GM12878 (cell line): ENCODE measurements at regions of chr20 and their contacts with region 1.

Region 1: GRCh38 chr20:50516180-50516934 is 6.2 kb downstream of the PTPN1 start:
- DNase-seq: peak; percentile 87
- ATAC-seq: peak; percentile 59
- H3K4me3 ChIP-seq: peak overlapping the region; percentile 100
- H3K27ac ChIP-seq: peak overlapping the region; percentile 98
- H3K4me1 ChIP-seq: peaks cover 46% of the 10 kb centered on the region
- H3K27me3 ChIP-seq: no peaks in the 10 kb centered on the region
- CTCF ChIP-seq: no peak
- EP300 ChIP-seq: peak; percentile 95 to 98
- POLR2A ChIP-seq: no peak
- RAD21 ChIP-seq: no peak

Region 2: DNA sequence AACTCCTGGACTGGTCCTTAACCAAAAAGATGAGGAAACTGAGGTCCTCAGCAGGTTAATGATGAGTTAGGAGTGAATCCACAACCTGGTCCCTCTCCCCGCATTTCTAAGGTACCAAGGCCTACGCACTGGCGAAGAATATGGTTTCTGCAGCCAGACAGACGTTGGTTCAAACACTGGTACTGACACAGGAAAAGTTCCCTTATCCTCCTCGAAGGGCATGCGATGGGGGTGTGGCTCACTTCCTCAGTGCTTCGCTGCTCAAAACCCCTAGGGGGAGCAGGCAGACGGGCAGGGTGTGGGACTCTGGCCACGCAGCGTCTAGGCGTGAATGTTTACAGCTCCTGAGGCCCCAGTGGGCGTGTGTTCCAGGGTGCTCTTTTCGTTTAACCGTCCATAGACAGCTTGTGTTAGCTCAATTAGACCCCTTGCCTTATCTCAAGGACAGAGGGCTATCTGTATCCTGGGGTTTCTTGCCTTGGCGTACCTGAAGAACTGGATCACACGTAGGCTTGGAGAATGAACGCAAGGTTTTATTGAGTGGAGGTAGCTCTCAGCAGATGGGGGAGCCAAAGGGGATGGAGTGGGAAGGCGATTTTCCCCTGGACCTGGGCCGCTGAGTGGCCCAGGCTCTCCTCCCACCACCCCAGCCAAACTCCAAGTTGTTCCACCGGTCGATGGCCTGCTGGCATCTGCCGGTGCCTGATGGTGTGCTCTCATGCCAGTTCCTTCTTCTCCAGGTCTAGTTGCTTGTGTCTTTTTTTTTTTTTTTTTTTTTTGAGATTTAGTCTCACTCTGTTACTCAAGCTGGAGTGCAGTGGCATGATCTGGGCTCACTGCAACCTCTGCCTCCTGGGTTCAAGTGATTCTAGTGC is 38.0 kb before region 1 on chr20:
- CTCF ChIA-PET with region 1: interaction called, 13 read pairs
- POLR2A ChIA-PET with region 1: interaction called, 29 read pairs
- RAD21 ChIA-PET with region 1: interaction called, 23 read pairs
- SMC1A ChIA-PET with region 1: interaction called, 2,799 read pairs
- in situ Hi-C with region 1: no loop called
- intact Hi-C with region 1: loop called (anchors 2 kb)
- DNase-seq: no peak
- ATAC-seq: peak; percentile 99
- H3K4me3 ChIP-seq: no peak overlapping the region
- H3K27ac ChIP-seq: no peak overlapping the region
- H3K4me1 ChIP-seq: peaks cover 21% of the 10 kb centered on the region
- H3K27me3 ChIP-seq: no peaks in the 10 kb centered on the region
- CTCF ChIP-seq: peak; percentile 60 to 87 (median 84)
- EP300 ChIP-seq: no peak
- POLR2A ChIP-seq: no peak
- RAD21 ChIP-seq: peak; percentile 79

Region 3: DNA sequence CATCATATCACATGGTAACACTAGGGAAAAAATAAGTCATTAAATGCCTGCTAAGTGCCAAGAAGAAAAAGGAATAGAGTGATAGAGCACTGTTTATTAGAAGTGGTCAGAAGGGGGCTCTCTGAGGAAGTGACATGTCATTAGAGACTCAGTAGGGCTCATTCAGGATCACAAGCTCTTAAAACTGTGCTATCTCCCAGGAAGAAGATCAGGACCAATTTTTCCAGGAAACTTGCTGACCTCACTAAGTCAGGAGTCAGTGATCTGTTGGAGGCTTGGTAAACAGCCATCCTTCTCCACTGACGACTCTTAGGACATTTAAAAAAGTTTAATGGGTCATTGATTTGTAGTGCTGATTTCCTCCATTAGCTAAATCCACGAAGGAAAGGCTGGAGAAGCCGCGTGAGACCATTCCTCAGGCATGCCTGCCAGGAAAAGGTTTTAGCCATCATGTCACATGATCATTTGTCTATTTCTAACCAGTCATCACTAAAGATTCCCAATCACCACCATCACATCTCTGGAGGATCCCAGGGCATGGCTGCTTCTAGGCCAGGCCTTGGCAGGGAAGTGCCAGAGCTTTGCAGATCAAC is 12.0 kb before region 1 on chr20:
- CTCF ChIA-PET with region 1: interaction called, 15 read pairs
- POLR2A ChIA-PET with region 1: interaction called, 33 read pairs
- RAD21 ChIA-PET with region 1: interaction called, 18 read pairs
- SMC1A ChIA-PET with region 1: interaction called, 2,799 read pairs
- in situ Hi-C with region 1: no loop called
- intact Hi-C with region 1: no loop called
- DNase-seq: no peak
- ATAC-seq: peak; percentile 64
- H3K4me3 ChIP-seq: no peak overlapping the region
- H3K27ac ChIP-seq: no peak overlapping the region
- H3K4me1 ChIP-seq: peaks cover 29% of the 10 kb centered on the region
- H3K27me3 ChIP-seq: no peaks in the 10 kb centered on the region
- CTCF ChIP-seq: peak; percentile 21 to 43 (median 21); a peak in 3 of 6 replicates
- EP300 ChIP-seq: no peak
- POLR2A ChIP-seq: no peak
- RAD21 ChIP-seq: peak; percentile 49; the same call in 1 of the 2 replicates

Region 4: DNA sequence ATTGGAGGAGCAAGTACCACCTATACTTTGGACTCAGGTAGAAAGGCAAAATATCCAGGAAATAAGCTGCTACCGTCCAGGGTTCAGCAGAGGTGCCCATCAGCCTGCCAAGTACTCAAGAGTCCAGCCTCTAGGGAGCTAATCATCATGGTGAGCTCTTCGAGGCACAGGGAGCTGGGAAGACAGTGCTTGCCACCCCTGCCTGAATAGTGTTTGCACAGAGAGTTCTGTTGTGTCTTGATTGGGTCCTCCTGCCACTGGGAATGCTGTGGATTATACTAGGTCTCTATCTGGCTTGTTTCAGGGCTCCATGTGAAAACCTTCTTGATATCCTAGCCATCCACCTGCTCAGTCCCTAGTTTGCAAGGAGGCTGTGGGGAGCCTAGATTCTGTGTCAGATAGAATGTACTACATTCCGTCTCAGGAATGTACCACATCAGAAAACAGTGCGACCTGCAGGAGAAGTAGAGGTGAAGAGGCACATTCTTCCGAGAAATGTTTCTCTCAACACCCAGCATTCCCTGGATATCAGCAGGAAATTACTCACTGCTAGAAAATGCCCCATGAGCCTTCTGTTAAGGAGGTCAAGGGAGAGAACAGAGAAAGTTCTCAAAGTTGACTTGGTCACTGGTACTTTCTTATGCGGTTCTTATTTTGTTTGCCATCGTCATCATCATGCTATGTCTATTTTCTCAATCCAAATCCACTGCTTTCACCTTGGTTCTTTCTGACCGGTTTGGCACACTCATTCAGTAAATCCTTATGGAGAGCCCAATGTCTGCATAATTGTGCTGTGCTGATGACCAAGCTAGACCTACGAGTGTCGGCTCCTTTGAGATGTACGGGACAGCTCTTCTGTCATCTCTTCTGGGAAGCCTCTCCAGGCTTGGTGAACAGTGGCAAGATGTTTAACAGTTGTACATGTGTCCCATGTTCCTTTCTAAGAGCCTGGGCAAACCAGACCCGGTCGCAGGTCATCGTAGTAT is 24.6 kb after region 1 on chr20:
- CTCF ChIA-PET with region 1: interaction called, 14 read pairs
- POLR2A ChIA-PET with region 1: interaction called, 44 read pairs
- RAD21 ChIA-PET with region 1: interaction called, 167 read pairs
- SMC1A ChIA-PET with region 1: interaction called, 2,799 read pairs
- in situ Hi-C with region 1: no loop called
- intact Hi-C with region 1: loop called (anchors 2 kb)
- DNase-seq: no peak
- ATAC-seq: peak; percentile 18
- H3K4me3 ChIP-seq: peak overlapping the region; percentile 42
- H3K27ac ChIP-seq: peak overlapping the region; percentile 78
- H3K4me1 ChIP-seq: peaks cover 67% of the 10 kb centered on the region
- H3K27me3 ChIP-seq: no peaks in the 10 kb centered on the region
- CTCF ChIP-seq: no peak
- EP300 ChIP-seq: no peak
- POLR2A ChIP-seq: peak; percentile 28; the same call in 1 of the 2 replicates
- RAD21 ChIP-seq: no peak

Region 5: DNA sequence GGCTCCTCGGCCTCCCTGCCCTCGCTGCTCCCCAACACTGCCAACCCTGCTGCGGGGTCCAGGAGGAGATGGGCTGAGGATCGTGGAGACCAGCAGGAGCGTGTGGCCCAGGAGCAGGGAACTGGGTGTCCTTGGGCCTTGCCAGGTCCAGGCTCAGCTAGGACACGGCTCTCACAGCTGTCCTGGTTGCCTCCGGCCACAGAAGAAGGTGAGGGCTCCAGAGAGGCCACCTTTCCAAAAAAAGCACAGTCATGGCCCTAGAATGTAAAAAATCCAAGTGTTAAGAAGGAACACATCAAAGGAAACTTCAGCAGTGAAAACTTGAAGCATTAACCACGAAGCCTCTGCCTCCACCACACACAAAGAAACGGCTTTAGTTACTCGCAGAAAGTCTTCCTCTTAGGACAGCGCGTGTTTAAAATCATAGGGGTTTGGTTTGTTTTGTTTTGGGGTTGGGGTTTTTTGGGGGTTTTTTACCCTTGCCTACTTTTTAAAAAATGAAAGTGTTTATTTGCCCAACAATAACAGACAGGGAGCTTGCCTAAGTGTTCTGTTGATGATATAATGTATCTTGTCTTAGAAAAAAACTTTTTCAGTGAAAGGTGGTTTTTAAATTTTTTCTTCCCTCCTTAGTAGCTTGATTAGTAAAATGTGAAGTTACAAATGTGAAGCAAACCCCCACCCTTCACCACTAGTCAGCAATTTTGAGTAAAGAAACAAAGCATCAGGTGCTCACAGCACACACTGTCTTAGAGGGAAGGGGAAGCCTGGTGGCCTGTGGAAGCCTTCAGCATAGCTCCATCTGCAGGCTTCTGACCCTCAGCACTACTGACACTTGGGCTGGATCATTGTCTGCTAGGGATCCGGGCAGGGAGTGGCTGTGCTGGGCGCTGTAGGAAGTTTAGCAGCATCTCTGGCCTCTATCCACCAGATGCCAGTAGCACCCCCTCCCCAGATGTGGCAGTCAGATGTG is 53.8 kb after region 1 on chr20:
- CTCF ChIA-PET with region 1: interaction called, 116 read pairs
- POLR2A ChIA-PET with region 1: interaction called, 25 read pairs
- RAD21 ChIA-PET with region 1: interaction called, 54 read pairs
- SMC1A ChIA-PET with region 1: interaction called, 2,799 read pairs
- in situ Hi-C with region 1: no loop called
- intact Hi-C with region 1: loop called (anchors 1 kb)
- DNase-seq: peak; percentile 68
- ATAC-seq: peak; percentile 96
- H3K4me3 ChIP-seq: no peak overlapping the region
- H3K27ac ChIP-seq: peak overlapping the region; percentile 83
- H3K4me1 ChIP-seq: peaks cover 25% of the 10 kb centered on the region
- H3K27me3 ChIP-seq: no peaks in the 10 kb centered on the region
- CTCF ChIP-seq: peak; percentile 70 to 90 (median 74)
- EP300 ChIP-seq: peak; percentile 61 to 71; a peak in 2 of 4 replicates
- POLR2A ChIP-seq: peak; percentile 26; the same call in 1 of the 2 replicates
- RAD21 ChIP-seq: peak; percentile 88